Right lobe of liver (tissue), 6 donors: ENCODE measurements at regions of chr2 and their contacts with region 1.

Region 1: GRCh38 chr2:219057709-219058540 is 2.8 kb downstream of the IHH start:
- DNase-seq: peak; percentile 84 to 88 (median 86)
- ATAC-seq: peak; percentile 82 to 86 (median 84)
- H3K4me3 ChIP-seq: peak overlapping the region in 2 of 3 donors; percentile 43 to 46
- H3K27ac ChIP-seq: no peak overlapping the region
- H3K4me1 ChIP-seq: peaks cover 0 to 31% (median 9%) of the 10 kb centered on the region in 4 donors
- H3K27me3 ChIP-seq: no peaks in the 10 kb centered on the region
- CTCF ChIP-seq: peak; percentile 95 to 98 (median 96)
- POLR2A ChIP-seq: no peak

Region 2: GRCh38 chr2:219119422-219120043 is 61.6 kb after region 1 on chr2:
- intact Hi-C with region 1: loop called in 1 of 2 experiments (anchors 2 kb)
- DNase-seq: peak in 2 of 3 donors; percentile 57 to 75
- ATAC-seq: peak; percentile 39 to 65 (median 58)
- H3K4me3 ChIP-seq: no peak overlapping the region
- H3K27ac ChIP-seq: no peak overlapping the region
- H3K4me1 ChIP-seq: peaks cover 0 to 42% (median 20%) of the 10 kb centered on the region in 4 donors
- H3K27me3 ChIP-seq: no peaks in the 10 kb centered on the region
- CTCF ChIP-seq: peak; percentile 54 to 67 (median 66)
- POLR2A ChIP-seq: no peak

Region 3: DNA sequence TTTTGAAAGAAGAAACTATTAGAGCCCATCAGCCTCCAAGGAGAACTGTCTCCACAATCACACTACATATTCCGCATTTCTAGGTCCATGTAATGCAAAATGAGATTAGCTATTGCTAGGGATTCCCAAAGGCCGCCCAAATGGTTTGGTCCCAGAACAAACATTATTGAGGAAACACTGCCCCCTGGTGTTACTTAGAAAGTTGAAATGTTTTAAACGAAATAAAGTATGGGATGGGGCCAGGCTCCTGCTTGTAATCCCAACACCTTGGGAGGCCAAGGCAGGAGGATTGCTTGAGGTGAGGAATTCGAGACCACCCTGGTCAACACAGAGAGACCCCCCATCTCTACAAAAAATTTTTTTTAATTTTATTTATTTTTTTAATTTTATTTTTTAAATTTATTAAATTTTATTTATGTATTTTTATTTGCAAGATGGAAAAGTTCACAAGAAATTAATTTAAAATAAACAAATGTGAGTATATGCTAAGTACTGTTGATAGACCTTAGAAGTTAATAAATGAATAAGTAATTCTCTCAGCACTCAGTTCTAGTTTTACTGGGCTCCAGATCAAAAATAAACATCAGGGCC is 97.2 kb after region 1 on chr2:
- intact Hi-C with region 1: loop called (anchors 5 to 10 kb)
- DNase-seq: no peak
- ATAC-seq: peak; percentile 80 to 89 (median 84)
- H3K4me3 ChIP-seq: no peak overlapping the region
- H3K27ac ChIP-seq: no peak overlapping the region
- H3K4me1 ChIP-seq: peaks cover 0 to 7% (median 2%) of the 10 kb centered on the region in 4 donors
- H3K27me3 ChIP-seq: no peaks in the 10 kb centered on the region
- CTCF ChIP-seq: peak; percentile 56 to 82 (median 60)
- POLR2A ChIP-seq: no peak